ENCODE measurements at regions of chrX and their contacts with region 1.

Region 1: DNA sequence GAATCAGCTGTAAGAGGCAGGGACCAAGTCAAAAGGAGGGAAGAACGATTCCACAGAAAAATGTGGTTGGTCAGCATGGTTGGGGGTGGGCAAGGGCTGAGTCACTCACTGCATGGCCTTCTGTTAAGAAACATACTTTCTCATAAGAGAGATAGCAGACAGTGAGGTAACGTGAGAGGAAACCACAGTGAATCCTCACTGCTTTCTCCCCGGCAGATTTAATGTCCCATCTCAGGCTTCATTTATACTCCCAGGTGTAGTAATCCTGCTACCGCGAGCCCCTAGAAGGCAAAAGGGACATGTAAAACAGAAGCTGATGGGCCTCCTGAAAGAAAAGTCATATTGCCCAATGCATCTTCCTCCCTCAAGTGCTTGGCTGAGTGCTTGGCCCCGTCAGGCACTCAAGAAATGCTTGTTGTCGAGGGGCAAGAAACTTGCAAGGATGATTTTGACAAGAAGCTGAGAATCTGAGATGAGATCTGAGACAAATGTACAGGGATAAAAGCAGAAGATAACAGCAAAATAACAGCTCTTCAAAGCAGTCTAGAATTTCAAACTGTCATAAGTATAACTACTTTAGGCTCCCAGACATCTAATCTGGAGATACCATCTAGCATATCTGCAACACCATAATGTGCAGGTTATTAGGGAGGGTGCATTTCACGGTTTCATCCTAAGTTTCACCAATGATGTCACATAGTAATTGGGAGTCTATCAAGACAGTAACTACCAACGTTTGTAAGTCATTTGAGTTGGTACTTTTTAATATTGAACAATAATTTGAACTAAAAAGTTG is 40.2 kb downstream of the SH3KBP1 start:
- DNase-seq: no peak
- ATAC-seq: no peak
- H3K4me3 ChIP-seq: no peak overlapping the region
- H3K4me3 Mint-ChIP-seq: peak overlapping the region; percentile 67
- H3K27ac ChIP-seq: peak overlapping the region in 1 of 2 donors; percentile 61
- H3K27ac Mint-ChIP-seq: peak overlapping the region; percentile 85
- H3K4me1 ChIP-seq: peaks cover 28 to 48% of the 10 kb centered on the region in 2 donors
- H3K4me1 Mint-ChIP-seq: peaks cover 62% of the 10 kb centered on the region
- H3K27me3 ChIP-seq: no peaks in the 10 kb centered on the region
- H3K27me3 Mint-ChIP-seq: no peaks in the 10 kb centered on the region
- CTCF ChIP-seq: no peak

Region 2: DNA sequence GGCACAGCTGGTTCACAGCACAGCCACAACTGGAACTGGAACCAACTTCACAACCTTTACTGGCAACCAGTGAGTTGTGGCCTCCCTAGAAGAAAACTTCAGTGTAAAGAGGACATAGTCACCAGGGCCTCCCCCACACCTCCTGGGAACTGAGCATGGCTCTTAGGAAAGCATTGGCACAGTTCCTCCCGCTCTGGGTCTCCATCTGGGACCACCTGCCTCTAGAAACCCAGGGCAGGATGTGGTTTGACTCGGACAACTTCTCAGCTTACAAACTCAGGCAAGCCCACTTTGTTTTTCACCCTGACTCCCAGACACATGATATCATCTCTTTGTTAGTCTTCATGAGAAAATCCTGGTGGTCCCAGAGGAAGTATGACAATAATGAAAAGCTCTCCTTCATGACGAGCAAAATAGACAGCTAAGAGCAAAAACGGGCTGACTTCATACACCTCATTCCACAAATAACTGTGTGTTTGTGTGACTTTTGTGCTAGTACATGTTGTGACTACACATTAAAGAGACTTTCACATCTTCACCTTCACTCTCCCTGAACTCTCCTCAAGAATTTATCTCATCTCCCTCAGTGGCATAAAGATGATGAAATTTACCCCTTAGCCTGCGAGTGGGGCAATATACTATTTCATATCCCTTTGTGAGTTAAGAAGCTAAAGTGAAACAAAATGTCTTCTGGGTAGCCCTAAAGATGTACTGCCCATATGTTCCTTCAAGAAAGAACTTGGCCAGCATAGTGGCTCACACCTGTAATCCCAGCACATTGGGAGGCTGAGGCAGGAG is 35.2 kb before region 1 on chrX:
- CTCF ChIA-PET with region 1: interaction called, 3 read pairs
- POLR2A ChIA-PET with region 1: interaction called, 5 read pairs
- intact Hi-C with region 1: loop called (anchors 5 kb)
- DNase-seq: no peak
- ATAC-seq: no peak
- H3K4me3 ChIP-seq: no peak overlapping the region
- H3K4me3 Mint-ChIP-seq: no peak overlapping the region
- H3K27ac ChIP-seq: peak overlapping the region in 1 of 2 donors; percentile 57
- H3K27ac Mint-ChIP-seq: peak overlapping the region; percentile 16
- H3K4me1 ChIP-seq: peaks cover 9 to 15% of the 10 kb centered on the region in 2 donors
- H3K4me1 Mint-ChIP-seq: peaks cover 63% of the 10 kb centered on the region
- H3K27me3 ChIP-seq: no peaks in the 10 kb centered on the region
- H3K27me3 Mint-ChIP-seq: no peaks in the 10 kb centered on the region
- CTCF ChIP-seq: no peak

Region 3: DNA sequence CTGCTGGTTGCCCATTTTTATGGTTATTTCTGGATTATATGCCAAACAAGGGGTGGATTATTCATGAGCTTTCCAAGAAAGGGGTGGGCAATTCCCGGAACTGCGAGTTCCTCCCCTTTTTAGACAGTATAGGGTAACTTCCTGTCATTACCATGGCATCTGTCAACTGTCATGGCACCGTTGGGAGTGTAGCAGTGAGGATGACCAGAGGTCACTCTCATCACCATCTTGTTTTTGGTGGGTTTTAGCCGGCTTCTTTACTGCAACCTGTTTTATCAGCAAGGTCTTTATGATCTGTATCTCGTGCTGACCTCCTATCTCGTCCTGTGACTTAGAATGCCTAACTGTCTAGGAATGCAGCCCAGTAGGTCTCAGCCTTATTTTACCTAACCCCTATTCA is 17.4 kb before region 1 on chrX:
- CTCF ChIA-PET with region 1: no interaction called
- POLR2A ChIA-PET with region 1: no interaction called
- intact Hi-C with region 1: no loop called
- DNase-seq: no peak
- ATAC-seq: no peak
- H3K4me3 ChIP-seq: no peak overlapping the region
- H3K4me3 Mint-ChIP-seq: no peak overlapping the region
- H3K27ac ChIP-seq: no peak overlapping the region
- H3K27ac Mint-ChIP-seq: no peak overlapping the region
- H3K4me1 ChIP-seq: peaks cover 8 to 9% of the 10 kb centered on the region in 2 donors
- H3K4me1 Mint-ChIP-seq: peaks cover 28% of the 10 kb centered on the region
- H3K27me3 ChIP-seq: no peaks in the 10 kb centered on the region
- H3K27me3 Mint-ChIP-seq: no peaks in the 10 kb centered on the region
- CTCF ChIP-seq: no peak

Measured in B cell (primary cell).